ENCODE measurements at regions of chr2 and their contacts with region 1.

Region 1: DNA sequence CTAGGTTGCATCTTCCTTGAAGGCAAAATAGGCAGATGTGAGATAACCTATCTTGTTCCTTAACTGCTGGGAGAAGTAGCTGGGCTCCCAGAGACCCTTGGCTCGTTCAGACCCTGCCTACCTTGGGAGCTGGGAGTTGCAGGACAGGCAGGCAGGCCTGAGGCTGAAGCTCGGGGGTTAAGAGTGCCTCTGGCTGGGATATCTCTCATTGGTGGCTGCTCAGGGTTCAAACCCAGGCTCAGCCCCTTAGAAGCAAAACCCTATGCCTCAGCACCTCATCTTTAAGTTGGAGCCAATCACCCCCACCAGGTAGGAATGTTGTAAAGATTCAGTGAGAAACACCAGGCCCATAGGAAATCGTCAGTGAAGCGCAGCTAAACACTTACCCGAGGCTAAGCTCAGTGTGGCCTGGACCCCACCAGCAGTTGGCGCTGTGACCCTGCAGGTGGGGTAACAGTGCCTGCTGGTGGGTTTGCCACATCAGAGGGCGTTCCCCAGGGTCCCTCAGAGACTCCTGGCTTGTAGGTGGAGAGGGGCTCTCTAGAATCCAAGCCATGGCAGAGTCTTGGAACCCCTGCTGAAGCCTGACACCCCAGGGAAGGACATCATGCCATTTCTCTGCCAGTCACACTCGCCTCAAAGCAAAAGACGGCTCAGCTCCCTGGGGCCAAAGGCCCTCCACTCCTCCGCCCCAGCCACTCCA is 54.6 kb upstream of the GPR17 start:
- DNase-seq: peak; percentile 88
- ATAC-seq: peak; percentile 98
- H3K4me3 Mint-ChIP-seq: no peak overlapping the region
- H3K27ac Mint-ChIP-seq: no peak overlapping the region
- H3K4me1 Mint-ChIP-seq: peaks cover 3% of the 10 kb centered on the region; the same call in 1 of the 2 replicates
- H3K27me3 Mint-ChIP-seq: no peaks in the 10 kb centered on the region
- CTCF ChIP-seq: peak; percentile 61

Region 2: DNA sequence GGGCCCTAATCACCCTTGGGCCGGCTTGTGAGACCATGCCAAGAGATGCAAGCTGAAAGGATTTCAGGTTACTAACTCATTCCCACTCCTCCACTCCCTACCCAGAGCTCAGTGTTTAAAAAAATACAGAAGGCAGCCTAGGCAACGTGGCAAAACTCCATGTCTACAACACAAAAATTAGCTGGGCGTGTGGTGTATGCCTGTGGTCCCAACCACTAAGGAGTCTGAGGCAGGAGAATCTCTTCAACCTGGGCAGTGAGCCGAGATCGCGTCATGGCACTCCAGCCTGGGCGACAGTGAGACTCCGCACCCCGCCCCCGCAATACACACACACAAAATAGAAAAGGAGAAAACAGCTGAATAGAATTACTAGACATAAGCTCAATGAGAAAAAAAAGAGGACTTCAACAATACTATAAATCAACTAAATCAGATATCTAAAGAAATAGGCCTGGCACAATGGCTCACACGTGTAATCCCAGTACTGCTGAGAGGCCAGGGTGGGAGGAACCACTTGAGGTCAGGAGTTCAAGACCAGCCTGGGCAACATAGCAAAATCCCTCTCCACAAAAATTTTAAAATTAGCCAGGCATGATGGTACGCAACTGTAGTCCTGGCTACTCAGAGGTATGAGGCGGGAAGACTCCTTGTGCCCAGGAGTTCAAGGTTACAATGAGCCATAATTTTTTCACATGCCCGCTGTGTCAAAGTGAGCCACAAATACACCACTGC is 75.2 kb before region 1 on chr2:
- CTCF ChIA-PET with region 1: interaction called, 12 read pairs
- POLR2A ChIA-PET with region 1: no interaction called
- DNase-seq: no peak
- ATAC-seq: no peak
- H3K4me3 Mint-ChIP-seq: no peak overlapping the region
- H3K27ac Mint-ChIP-seq: peak overlapping the region; percentile 65
- H3K4me1 Mint-ChIP-seq: peaks cover 44% of the 10 kb centered on the region
- H3K27me3 Mint-ChIP-seq: no peaks in the 10 kb centered on the region
- CTCF ChIP-seq: no peak

Region 3: GRCh38 chr2:127576433-127577207 is 14.8 kb before region 1 on chr2:
- CTCF ChIA-PET with region 1: interaction called, 31 read pairs
- POLR2A ChIA-PET with region 1: no interaction called
- DNase-seq: no peak
- ATAC-seq: peak; percentile 60
- H3K4me3 Mint-ChIP-seq: no peak overlapping the region
- H3K27ac Mint-ChIP-seq: no peak overlapping the region
- H3K4me1 Mint-ChIP-seq: no peaks in the 10 kb centered on the region
- H3K27me3 Mint-ChIP-seq: no peaks in the 10 kb centered on the region; the same call in 1 of the 2 replicates
- CTCF ChIP-seq: no peak

Region 4: GRCh38 chr2:127632592-127633489 is 41.5 kb after region 1 on chr2:
- CTCF ChIA-PET with region 1: interaction called, 70 read pairs
- POLR2A ChIA-PET with region 1: interaction called, 3 read pairs
- DNase-seq: no peak
- ATAC-seq: no peak
- H3K4me3 Mint-ChIP-seq: no peak overlapping the region
- H3K27ac Mint-ChIP-seq: no peak overlapping the region
- H3K4me1 Mint-ChIP-seq: peaks cover 2% of the 10 kb centered on the region
- H3K27me3 Mint-ChIP-seq: no peaks in the 10 kb centered on the region
- CTCF ChIP-seq: no peak

Region 5: GRCh38 chr2:127664065-127664894 is 72.9 kb after region 1 on chr2:
- CTCF ChIA-PET with region 1: interaction called, 19 read pairs
- POLR2A ChIA-PET with region 1: no interaction called
- DNase-seq: no peak
- ATAC-seq: peak; percentile 76
- H3K4me3 Mint-ChIP-seq: peak overlapping the region; percentile 60
- H3K27ac Mint-ChIP-seq: no peak overlapping the region
- H3K4me1 Mint-ChIP-seq: peaks cover 3% of the 10 kb centered on the region
- H3K27me3 Mint-ChIP-seq: peaks cover 35% of the 10 kb centered on the region
- CTCF ChIP-seq: no peak

Region 6: DNA sequence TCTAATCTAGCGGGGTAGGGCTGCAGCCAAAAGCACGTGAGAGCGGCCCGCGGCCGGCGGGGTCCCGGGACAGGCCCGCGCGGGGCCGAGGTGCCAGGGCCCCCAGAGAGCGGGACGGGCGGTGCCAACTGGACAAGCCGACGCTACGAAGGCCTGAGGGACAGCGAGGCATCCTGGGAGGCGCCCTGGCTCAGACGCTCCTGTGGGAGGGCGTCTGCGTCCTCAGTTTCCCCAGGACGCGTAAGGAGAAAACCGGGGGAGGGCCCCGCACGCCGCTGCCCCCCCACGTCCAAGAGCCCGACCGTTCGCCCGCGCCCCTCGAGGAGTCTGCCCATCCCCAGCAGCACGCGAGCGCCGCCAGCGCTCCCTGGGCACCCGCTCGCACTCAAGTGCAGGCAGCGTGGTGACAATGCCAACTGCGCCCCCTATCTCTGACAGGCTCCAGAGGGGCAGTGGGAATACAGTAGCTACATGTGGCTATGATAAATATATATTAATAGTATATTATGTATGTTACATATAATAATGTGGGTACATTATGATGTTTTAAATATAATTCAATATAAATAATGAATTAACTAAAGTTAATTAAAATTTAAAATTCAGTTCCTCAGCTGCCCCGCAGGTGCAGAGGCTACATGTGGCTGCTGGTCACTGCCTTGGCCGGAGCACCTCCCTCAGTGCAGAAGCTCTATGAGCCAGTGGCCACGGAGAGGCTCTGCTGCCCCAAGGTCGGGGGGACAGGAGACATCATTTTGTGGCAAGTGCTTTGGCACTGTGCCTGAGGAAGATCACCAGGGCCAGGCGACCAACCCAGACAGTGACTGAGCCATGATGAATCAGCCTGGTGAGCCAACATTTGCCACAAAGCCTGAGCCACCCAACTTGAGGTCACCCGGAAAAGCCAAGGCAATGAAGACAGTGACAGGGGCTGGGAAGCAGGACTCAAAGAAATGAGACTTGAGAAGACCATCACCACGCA is 104.4 kb after region 1 on chr2:
- CTCF ChIA-PET with region 1: interaction called, 61 read pairs
- POLR2A ChIA-PET with region 1: interaction called, 3 read pairs
- DNase-seq: peak; percentile 72
- ATAC-seq: peak; percentile 73
- H3K4me3 Mint-ChIP-seq: no peak overlapping the region
- H3K27ac Mint-ChIP-seq: no peak overlapping the region
- H3K4me1 Mint-ChIP-seq: peaks cover 11% of the 10 kb centered on the region
- H3K27me3 Mint-ChIP-seq: peaks cover 46% of the 10 kb centered on the region
- CTCF ChIP-seq: peak; percentile 34; the same call in 1 of the 2 replicates

Measured in WTC11 (cell line).